Spleen (tissue), 13 donors: ENCODE measurements at regions of chr3 and their contacts with region 1.

Region 1: GRCh38 chr3:21747376-21747775 is 3.6 kb downstream of the ZNF385D start:
- DNase-seq: no peak
- H3K4me3 ChIP-seq: no peak overlapping the region
- H3K27ac ChIP-seq: no peak overlapping the region
- H3K4me1 ChIP-seq: peaks cover 0 to 11% (median 7%) of the 10 kb centered on the region in 6 donors
- H3K27me3 ChIP-seq: peaks cover 0 to 18% (median 4%) of the 10 kb centered on the region in 7 donors
- CTCF ChIP-seq: no peak
- POLR2A ChIP-seq: no peak

Region 2: DNA sequence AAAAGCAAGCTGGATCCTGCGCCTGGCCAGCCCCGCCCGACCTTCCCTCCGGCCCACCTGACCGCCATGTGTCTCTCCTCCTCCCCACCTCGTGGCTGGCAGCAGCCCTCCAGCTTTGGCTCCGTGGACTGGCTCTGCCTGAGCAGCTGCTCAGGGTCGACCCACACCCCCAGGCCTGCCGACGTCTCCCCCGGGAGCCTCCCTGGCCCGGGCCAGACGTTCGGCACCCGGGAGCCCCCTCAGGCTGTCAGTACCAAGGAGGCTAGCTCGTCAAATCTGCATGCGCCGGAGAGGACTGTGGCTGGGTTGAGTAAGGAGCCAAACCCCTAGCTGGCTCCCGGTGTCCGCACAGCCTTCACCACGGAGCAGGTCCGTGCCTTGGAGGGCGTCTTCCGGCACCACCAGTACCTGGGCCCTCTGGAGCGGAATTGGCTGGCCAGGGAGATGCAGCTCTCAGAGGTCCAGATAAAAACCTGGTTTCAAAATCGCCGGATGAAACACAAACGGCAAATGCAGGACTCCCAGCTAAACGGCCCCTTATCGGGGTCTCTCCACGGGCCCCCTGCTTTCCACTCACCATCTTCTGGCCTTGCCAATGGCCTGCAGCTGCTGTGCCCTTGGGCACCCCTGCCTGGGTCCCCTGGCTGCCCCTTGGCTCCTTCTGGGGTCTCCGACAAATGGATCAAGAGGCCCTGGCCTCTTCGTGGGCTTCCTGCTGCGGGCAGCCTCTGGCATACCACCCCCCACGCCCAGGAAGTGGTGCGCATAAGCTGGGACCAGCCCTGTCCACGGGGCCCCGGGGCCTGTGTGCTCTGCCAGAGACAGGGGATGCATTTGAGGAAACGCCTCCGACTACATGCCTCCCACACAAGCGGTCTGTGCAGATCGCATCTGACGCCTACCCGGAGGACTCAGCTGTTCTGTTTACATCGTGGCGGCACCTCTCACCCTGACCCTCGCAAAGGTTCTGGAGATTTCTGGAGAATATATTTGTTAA is 341.4 kb before region 1 on chr3:
- intact Hi-C with region 1: no loop called
- DNase-seq: no peak
- H3K4me3 ChIP-seq: no peak overlapping the region
- H3K27ac ChIP-seq: no peak overlapping the region
- H3K4me1 ChIP-seq: no peaks in the 10 kb centered on the region
- H3K27me3 ChIP-seq: no peaks in the 10 kb centered on the region
- CTCF ChIP-seq: no peak
- POLR2A ChIP-seq: no peak

Region 3: DNA sequence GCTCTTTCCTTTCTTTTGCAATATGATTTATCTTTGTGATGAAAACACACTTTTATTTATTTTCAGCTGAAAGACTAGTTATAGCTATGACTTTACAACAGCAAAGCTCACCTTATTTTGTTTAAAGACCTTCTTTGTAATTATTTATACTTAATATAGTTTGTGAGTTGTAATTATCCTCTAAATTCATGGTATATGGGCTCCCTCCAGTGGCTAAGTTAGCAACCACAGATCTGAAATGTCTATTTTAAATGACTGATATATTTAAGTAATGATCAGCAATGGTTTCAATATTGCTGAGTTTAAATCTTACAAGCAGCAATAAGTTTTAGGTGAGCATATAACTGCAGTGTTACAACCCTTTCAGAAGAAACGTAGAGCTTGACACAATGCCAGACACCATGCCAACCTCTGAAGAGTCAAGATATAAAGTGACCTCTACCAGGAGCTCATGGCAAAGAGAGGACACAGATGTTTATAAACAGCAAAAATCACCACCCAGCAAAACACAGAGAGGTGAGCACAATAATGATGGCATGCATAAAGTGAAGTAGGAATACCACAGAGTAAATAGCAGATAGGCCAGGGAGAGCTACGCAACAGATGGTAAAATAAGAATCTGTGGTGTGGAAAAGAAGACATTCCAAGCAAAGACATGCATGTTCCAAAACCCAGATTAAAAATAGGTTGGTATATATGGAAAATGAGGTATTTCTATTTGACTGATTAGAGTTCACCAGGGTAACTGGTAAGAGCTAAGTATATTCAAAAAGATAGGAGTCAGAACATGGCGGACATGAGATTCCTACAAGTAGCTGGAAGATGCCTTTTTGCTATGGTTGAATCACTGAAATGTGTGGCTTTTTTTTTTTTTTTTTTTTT is 147.3 kb after region 1 on chr3:
- intact Hi-C with region 1: loop called (anchors 10 kb)
- DNase-seq: no peak
- H3K4me3 ChIP-seq: no peak overlapping the region
- H3K27ac ChIP-seq: no peak overlapping the region
- H3K4me1 ChIP-seq: no peaks in the 10 kb centered on the region
- H3K27me3 ChIP-seq: no peaks in the 10 kb centered on the region
- CTCF ChIP-seq: peak in 8 of 11 experiments; percentile 12 to 60 (median 46)
- POLR2A ChIP-seq: no peak